ENCODE measurements at regions of chr2 and their contacts with region 1.

Region 1: GRCh38 chr2:68709421-68709911 is 25.1 kb upstream of the ARHGAP25 start:
- DNase-seq: peak in 7 of 9 donors; percentile 14 to 41 (median 37)
- ATAC-seq: peak; percentile 66
- H3K4me3 ChIP-seq: no peak overlapping the region
- H3K4me3 Mint-ChIP-seq: peak overlapping the region in 5 of 10 donors; percentile 10 to 75 (median 55)
- H3K27ac ChIP-seq: no peak overlapping the region
- H3K27ac Mint-ChIP-seq: peak overlapping the region in 6 of 9 donors; percentile 22 to 74 (median 42)
- H3K4me1 ChIP-seq: peaks cover under 1 to 3% of the 10 kb centered on the region in 2 donors
- H3K4me1 Mint-ChIP-seq: peaks cover 5 to 32% (median 26%) of the 10 kb centered on the region in 7 donors
- H3K27me3 ChIP-seq: no peaks in the 10 kb centered on the region
- H3K27me3 Mint-ChIP-seq: peaks cover 0 to 16% (median 0%) of the 10 kb centered on the region in 5 donors

Region 2: DNA sequence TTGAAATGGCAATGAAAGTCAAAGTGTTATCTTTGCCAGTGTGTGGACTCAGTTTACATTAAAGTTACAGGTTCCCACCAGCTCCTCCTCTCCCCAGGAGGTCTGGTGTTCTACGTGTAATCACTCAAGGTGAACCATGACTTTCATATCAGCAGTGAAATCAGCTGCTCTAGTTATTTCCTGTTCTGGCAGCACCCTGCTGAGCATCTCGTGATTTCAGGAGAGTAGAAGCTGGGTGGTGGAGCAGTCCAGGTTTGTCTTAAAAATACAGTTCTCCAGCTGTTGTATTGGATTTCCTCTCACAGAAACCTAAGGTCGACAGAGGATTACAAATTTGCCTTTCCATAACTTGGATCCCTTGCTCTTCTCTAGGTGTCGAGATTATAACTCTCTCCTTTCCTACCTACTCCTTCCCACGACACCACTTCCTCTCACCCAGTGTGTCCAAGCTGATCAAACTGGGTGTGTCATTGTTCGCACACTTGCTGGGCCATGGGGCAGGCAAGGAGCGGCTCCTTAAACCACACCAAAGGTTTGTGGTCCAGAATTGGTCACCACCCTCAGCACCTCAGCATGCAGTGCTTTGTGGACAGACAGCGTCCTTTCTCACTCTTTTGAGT is 12.1 kb after region 1 on chr2:
- CTCF ChIA-PET with region 1: interaction called, 18 read pairs
- POLR2A ChIA-PET with region 1: interaction called, 6 read pairs
- intact Hi-C with region 1: no loop called
- DNase-seq: peak in 7 of 9 donors; percentile 52 to 69 (median 61)
- ATAC-seq: peak; percentile 83
- H3K4me3 ChIP-seq: peak overlapping the region; percentile 9
- H3K4me3 Mint-ChIP-seq: peak overlapping the region; percentile 76 to 91 (median 82)
- H3K27ac ChIP-seq: peak overlapping the region; percentile 68
- H3K27ac Mint-ChIP-seq: peak overlapping the region; percentile 78 to 97 (median 95)
- H3K4me1 ChIP-seq: peaks cover 72 to 87% of the 10 kb centered on the region in 2 donors
- H3K4me1 Mint-ChIP-seq: peaks cover 65 to 96% (median 93%) of the 10 kb centered on the region in 7 donors
- H3K27me3 ChIP-seq: no peaks in the 10 kb centered on the region
- H3K27me3 Mint-ChIP-seq: no peaks in the 10 kb centered on the region

Region 3: GRCh38 chr2:68742626-68743415 is 33.4 kb after region 1 on chr2:
- CTCF ChIA-PET with region 1: interaction called, 68 read pairs
- POLR2A ChIA-PET with region 1: interaction called, 3 read pairs
- intact Hi-C with region 1: no loop called
- DNase-seq: no peak
- ATAC-seq: no peak
- H3K4me3 ChIP-seq: peak overlapping the region; percentile 27
- H3K4me3 Mint-ChIP-seq: peak overlapping the region in 8 of 10 donors; percentile 43 to 82 (median 67)
- H3K27ac ChIP-seq: peak overlapping the region; percentile 5
- H3K27ac Mint-ChIP-seq: peak overlapping the region in 8 of 9 donors; percentile 42 to 87 (median 76)
- H3K4me1 ChIP-seq: peaks cover 93% of the 10 kb centered on the region in 2 donors
- H3K4me1 Mint-ChIP-seq: peaks cover 69 to 98% (median 93%) of the 10 kb centered on the region in 7 donors
- H3K27me3 ChIP-seq: no peaks in the 10 kb centered on the region
- H3K27me3 Mint-ChIP-seq: no peaks in the 10 kb centered on the region

Region 4: DNA sequence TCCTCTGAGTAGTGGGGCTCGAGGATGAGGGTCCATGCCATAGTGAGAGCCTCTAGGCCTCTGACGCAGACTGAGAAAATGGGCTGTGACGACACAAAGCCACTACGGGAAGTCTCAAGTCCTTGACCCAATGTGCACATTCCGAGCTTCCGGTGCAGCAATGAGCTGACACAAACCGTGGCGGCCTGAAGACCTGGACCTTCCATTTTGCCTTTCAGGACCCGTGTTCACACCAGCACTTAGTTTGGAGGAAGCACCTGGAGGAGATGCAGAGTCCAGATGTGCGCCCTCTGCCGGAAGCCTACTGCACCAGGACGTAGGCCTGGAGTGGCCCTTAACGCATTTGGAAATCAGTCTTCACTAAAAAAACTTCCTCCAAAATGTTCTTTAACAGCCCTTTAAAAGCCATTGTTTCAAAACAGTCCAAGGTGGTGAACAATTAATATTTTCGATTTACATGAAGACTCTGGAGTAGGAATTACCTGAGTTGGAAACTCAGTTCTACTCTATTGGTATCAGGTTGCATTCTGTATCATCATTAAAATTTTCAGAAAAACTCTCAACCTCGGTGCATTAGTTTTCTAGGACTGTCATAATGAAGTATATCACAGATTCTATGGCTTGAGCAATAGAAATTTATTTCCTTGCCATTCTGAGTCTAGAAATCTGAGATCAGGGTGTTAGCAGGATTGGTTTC is 127.8 kb after region 1 on chr2:
- CTCF ChIA-PET with region 1: interaction called, 16 read pairs
- POLR2A ChIA-PET with region 1: interaction called, 3 read pairs
- intact Hi-C with region 1: loop called (anchors 1 to 2 kb)
- DNase-seq: peak; percentile 25 to 67 (median 57)
- ATAC-seq: peak; percentile 77
- H3K4me3 ChIP-seq: no peak overlapping the region
- H3K4me3 Mint-ChIP-seq: no peak overlapping the region
- H3K27ac ChIP-seq: no peak overlapping the region
- H3K27ac Mint-ChIP-seq: peak overlapping the region in 2 of 9 donors; percentile 15 to 75
- H3K4me1 ChIP-seq: peaks cover 0 to 13% of the 10 kb centered on the region in 2 donors
- H3K4me1 Mint-ChIP-seq: peaks cover 15 to 51% (median 43%) of the 10 kb centered on the region in 7 donors
- H3K27me3 ChIP-seq: no peaks in the 10 kb centered on the region
- H3K27me3 Mint-ChIP-seq: no peaks in the 10 kb centered on the region